HepG2 (cell line): ENCODE measurements at regions of chr7 and their contacts with region 1.

Region 1: GRCh38 chr7:114508086-114508485 is 93.5 kb downstream of the FOXP2 start:
- DNase-seq: no peak
- ATAC-seq: no peak
- H3K4me3 ChIP-seq: no peak overlapping the region
- H3K27ac ChIP-seq: no peak overlapping the region
- H3K4me1 ChIP-seq: no peaks in the 10 kb centered on the region
- H3K27me3 ChIP-seq: no peaks in the 10 kb centered on the region
- CTCF ChIP-seq: no peak
- EP300 ChIP-seq: no peak
- POLR2A ChIP-seq: no peak
- RAD21 ChIP-seq: no peak

Region 2: GRCh38 chr7:114468844-114469243 is 39.2 kb before region 1 on chr7:
- CTCF ChIA-PET with region 1: no interaction called
- POLR2A ChIA-PET with region 1: no interaction called
- in situ Hi-C with region 1: no loop called
- intact Hi-C with region 1: loop called (anchors 2 kb)
- DNase-seq: no peak
- ATAC-seq: no peak
- H3K4me3 ChIP-seq: no peak overlapping the region
- H3K27ac ChIP-seq: no peak overlapping the region
- H3K4me1 ChIP-seq: no peaks in the 10 kb centered on the region
- H3K27me3 ChIP-seq: no peaks in the 10 kb centered on the region; a peak in 1 of 5 replicates
- CTCF ChIP-seq: no peak
- EP300 ChIP-seq: no peak
- POLR2A ChIP-seq: no peak
- RAD21 ChIP-seq: no peak